ENCODE measurements at regions of chr5 and their contacts with region 1.

Region 1: DNA sequence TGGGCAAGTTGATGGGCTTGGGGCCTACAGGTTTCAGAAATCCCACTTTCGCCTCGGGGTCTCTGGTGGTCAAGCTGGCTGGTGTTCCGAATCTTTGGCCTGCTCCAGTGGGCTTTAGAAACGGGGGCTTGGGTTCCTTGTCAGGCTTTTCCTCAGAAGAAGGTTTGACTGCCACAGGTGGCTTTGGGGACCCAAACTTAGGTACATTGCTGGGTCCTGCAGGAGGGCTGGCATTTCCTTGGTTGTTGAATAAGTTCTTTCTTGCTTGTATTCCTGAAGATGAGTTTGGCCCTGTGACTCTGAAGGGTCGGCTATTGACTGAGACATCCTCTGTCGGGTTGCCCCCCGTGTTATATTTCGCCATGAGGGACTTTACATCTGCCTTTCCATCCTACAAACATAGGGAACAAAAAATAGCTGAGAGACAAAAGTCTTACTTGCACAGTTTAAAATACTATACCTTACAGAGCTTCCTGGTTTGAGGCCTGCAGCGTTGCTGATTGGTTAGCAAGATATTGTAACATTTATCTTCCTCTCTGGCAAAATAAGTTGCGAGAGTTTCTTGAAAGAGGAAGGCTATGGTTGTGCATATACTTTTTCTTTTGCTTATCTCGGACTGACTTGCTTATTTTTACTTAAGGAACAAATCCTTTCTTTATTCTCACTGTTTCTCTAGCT is 16.6 kb downstream of the FYB1 start:
- DNase-seq: peak; percentile 58
- ATAC-seq: peak; percentile 23
- H3K4me3 Mint-ChIP-seq: peak overlapping the region; percentile 92
- H3K27ac Mint-ChIP-seq: peak overlapping the region; percentile 97
- H3K4me1 Mint-ChIP-seq: peaks cover 36% of the 10 kb centered on the region
- H3K27me3 Mint-ChIP-seq: no peaks in the 10 kb centered on the region
- CTCF ChIP-seq: no peak

Region 2: DNA sequence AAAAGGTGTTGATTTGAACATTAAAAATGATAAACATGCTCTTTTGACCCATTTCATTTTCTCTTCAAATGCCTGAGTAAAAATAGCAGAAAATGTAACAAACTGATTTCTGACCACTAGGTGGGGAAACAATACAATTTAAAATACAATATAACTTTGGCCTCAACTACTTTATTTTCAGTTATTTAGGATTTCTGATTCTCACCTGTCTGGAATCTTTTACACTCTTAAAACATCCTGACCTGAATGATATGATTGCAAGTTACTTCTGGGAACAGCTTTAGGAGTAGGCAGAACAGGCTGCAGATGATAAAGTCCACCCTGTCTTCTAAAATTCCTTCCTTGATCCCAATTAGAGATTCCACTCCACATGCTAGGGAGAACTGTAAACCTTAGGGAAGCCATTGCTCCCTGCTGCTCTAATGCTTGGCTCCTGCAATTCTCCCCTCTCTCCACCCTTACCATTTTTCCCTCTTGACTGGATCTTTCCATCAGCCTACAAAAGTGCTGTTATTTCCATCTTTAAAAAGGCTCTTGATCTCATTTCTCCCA is 53.7 kb before region 1 on chr5:
- CTCF ChIA-PET with region 1: interaction called, 13 read pairs
- POLR2A ChIA-PET with region 1: no interaction called
- intact Hi-C with region 1: no loop called
- DNase-seq: no peak
- ATAC-seq: peak; percentile 45
- H3K4me3 Mint-ChIP-seq: no peak overlapping the region
- H3K27ac Mint-ChIP-seq: peak overlapping the region; percentile 90
- H3K4me1 Mint-ChIP-seq: peaks cover 68% of the 10 kb centered on the region
- H3K27me3 Mint-ChIP-seq: no peaks in the 10 kb centered on the region
- CTCF ChIP-seq: peak; percentile 62

Region 3: GRCh38 chr5:39158127-39158593 is 44.6 kb before region 1 on chr5:
- CTCF ChIA-PET with region 1: interaction called, 3 read pairs
- POLR2A ChIA-PET with region 1: no interaction called
- intact Hi-C with region 1: loop called (anchors 5 kb)
- DNase-seq: no peak
- ATAC-seq: no peak
- H3K4me3 Mint-ChIP-seq: peak overlapping the region; percentile 24
- H3K27ac Mint-ChIP-seq: peak overlapping the region; percentile 66
- H3K4me1 Mint-ChIP-seq: peaks cover 80% of the 10 kb centered on the region
- H3K27me3 Mint-ChIP-seq: no peaks in the 10 kb centered on the region
- CTCF ChIP-seq: no peak